PC-3 (cell line): ENCODE measurements at regions of chr19 and their contacts with region 1.

Region 1: DNA sequence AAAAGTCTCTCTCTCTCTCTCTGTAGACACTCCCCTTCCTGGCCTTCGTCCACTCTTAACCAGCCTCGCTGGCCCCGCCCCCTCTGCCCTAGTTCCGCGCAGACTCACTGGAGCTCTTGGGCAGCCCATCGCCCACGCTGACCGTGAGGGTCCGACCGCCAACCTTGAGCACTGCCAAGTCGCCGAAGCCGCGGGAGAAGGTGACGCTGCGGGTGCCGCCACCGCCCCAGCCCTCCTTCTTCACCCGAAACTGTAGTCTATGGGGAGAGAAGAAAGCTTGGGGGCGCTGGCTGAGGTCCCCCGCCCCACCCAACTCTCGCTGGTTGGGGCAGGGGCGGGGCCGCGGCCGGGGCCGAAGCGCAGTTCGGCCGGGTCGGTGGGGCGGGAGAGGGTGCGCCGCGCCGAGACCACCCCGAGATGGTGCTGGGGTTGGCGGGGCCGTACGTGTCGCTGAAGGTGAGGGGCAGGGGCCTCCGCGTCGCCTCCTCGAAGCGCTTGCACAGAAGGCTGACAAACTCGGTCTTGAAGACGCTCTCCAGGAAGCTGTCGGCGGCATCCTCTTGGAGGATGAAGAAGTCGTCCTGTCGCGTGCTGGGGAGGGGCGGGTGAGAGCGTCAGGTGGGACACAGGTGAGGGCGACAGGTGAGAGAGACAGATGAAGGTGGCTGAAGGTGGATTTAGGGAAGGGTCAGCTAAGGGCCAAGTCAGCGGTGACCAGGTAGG is 12.5 kb upstream of the ZNF414 start:
- DNase-seq: peak; percentile 95
- ATAC-seq: peak; percentile 67
- H3K4me3 ChIP-seq: peak overlapping the region; percentile 85
- H3K27ac ChIP-seq: peak overlapping the region; percentile 63
- H3K4me1 ChIP-seq: peaks cover 10% of the 10 kb centered on the region
- H3K27me3 ChIP-seq: no peaks in the 10 kb centered on the region
- CTCF ChIP-seq: no peak

Region 2: DNA sequence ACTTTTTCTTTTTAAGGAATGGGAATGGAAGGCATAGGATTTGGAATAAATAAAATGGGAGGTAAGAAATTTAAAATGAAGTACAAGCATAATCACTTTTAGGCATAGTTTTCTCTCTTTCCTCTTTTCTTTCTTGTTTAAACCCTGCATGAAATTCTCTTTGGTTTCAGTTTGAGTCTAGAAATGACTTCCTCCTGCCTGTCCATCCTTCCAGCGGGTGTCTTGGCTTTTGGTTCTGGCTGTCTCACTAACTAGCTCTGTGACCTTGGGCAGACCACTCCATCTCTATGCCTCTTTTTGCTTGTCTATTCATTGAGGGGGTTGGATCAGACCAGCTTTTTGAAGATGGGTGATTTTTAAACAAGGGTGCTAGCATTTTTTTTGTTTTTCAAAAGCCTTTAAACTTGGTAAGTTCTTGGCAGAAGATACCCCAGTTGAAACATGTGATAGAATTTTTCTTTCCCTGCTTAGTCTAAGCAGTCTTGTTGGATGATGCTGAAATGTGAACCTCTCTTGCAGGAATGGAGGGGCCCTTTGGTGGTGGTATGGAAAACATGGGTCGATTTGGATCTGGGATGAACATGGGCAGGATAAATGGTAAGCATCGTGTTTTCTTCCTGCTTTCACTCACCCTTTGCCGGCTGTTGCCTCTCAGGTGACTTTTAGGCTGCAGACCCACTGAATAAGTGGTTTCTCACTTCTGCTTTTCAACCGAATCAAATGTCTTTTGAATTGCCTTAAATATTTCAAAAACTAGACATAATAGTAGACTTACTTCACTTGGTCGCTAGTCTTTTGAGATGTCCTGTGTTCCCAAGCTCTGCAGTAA is 52.6 kb before region 1 on chr19:
- CTCF ChIA-PET with region 1: interaction called, 10 read pairs
- POLR2A ChIA-PET with region 1: no interaction called
- intact Hi-C with region 1: no loop called
- DNase-seq: no peak
- ATAC-seq: no peak
- H3K4me3 ChIP-seq: no peak overlapping the region
- H3K27ac ChIP-seq: no peak overlapping the region
- H3K4me1 ChIP-seq: no peaks in the 10 kb centered on the region
- H3K27me3 ChIP-seq: no peaks in the 10 kb centered on the region
- CTCF ChIP-seq: no peak

Region 3: GRCh38 chr19:8494158-8494557 is 32.3 kb before region 1 on chr19:
- CTCF ChIA-PET with region 1: no interaction called
- POLR2A ChIA-PET with region 1: no interaction called
- intact Hi-C with region 1: no loop called
- DNase-seq: no peak
- ATAC-seq: no peak
- H3K4me3 ChIP-seq: no peak overlapping the region
- H3K27ac ChIP-seq: no peak overlapping the region
- H3K4me1 ChIP-seq: no peaks in the 10 kb centered on the region
- H3K27me3 ChIP-seq: no peaks in the 10 kb centered on the region
- CTCF ChIP-seq: no peak

Region 4: GRCh38 chr19:8513687-8514504 is 12.6 kb before region 1 on chr19 and contains the start of gene ZNF414:
- CTCF ChIA-PET with region 1: interaction called, 7 read pairs
- POLR2A ChIA-PET with region 1: interaction called, 9 read pairs
- intact Hi-C with region 1: loop called (anchors 1 kb)
- DNase-seq: peak; percentile 98
- ATAC-seq: peak; percentile 95
- H3K4me3 ChIP-seq: peak within 1 kb of the TSS; percentile 78
- H3K27ac ChIP-seq: peak within 1 kb of the TSS; percentile 91
- H3K4me1 ChIP-seq: peaks cover 9% of the 10 kb centered on the region
- H3K27me3 ChIP-seq: no peaks in the 10 kb centered on the region
- CTCF ChIP-seq: no peak
- total RNA-seq, gene ZNF414: 4.6 and 4.7 TPM in 2 replicates

Region 5: DNA sequence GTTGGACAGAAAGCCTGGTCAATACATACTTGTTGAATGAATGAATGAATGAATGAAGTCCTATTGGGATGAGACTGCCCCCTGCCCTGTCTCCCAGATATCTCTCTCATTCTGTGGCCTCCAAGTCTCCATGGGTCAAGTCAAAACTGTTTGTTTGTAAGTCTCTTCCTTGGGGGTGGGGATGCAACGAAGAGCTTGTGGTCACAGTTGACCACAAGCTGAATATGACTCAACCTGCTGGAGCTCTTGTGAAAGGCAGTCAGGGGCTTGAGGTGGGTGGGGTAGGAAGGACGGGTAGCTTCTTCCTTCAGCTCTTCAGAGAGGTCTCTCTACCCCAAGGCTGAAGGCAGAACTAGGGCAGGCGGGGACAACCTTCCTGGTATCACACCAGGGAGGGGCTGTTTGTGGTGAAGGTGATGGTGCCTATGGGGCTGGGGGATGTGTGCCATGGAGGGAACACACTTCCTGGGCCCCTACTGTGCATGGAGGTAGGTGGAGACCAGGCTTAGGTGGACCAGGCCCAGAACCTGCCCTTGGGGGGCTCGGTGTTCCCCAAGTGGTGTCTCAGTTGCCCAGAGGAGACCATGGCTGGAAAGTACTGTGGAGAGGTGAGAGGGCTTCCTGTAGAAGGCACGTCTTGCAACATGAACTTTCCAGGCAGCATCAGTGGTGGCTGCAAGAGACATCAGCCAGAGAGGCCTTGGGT is 42.7 kb after region 1 on chr19:
- CTCF ChIA-PET with region 1: interaction called, 4 read pairs
- POLR2A ChIA-PET with region 1: interaction called, 10 read pairs
- intact Hi-C with region 1: no loop called
- DNase-seq: peak; percentile 96
- ATAC-seq: peak; percentile 75
- H3K4me3 ChIP-seq: no peak overlapping the region
- H3K27ac ChIP-seq: no peak overlapping the region
- H3K4me1 ChIP-seq: peaks cover 26% of the 10 kb centered on the region
- H3K27me3 ChIP-seq: no peaks in the 10 kb centered on the region
- CTCF ChIP-seq: peak; percentile 26; the same call in 1 of the 2 replicates